Dorsolateral prefrontal cortex (tissue), 120 donors: ENCODE measurements at regions of chr11 and their contacts with region 1.

Region 1: DNA sequence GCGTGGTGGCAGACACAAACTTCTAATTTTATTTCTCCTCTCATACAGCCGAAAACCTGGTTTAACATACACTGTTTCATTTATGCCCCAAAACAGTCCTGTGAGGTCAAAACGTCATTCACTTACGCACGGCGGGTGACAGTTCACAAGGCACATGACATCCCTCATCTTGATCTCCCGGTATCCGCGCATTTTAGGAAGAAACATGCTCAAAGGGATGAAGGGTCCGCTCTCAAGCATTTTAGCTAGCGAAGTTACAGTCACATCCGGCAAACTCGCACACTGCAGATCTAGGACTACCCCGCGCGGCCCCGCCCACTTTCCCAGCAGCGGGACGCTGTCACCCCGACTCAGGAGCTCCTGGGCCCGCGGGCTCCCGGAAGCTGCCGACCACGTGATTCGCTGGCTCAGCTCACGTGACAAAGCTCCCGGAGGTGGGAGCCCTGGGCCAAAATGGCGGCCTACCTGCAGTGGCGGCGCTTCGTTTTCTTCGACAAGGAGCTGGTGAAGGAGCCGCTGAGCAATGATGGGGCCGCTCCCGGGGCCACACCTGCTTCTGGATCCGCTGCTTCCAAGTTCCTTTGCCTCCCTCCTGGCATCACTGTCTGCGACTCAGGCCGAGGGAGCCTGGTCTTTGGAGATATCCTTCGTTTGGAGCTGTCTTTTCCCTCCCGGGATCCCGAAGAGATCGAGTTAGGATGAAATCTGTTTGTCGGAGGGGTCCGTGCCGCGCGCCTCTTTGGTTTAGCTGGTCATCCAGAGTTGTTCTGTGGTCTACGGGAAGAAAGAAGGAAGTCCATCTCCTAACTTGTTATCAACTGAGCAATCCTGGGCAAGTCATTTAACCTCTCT is at the start of gene VPS11:
- DNase-seq: peak; percentile 95 to 99 (median 97)
- H3K4me3 ChIP-seq: peak within 1 kb of the TSS; percentile 68 to 100 (median 87)
- H3K27ac ChIP-seq: peak within 1 kb of the TSS; percentile 51 to 97 (median 90)
- H3K27me3 ChIP-seq: no peaks in the 10 kb centered on the region
- CTCF ChIP-seq: peak in 39 of 56 donors; percentile 3 to 61 (median 33)
- total RNA-seq, gene VPS11: 33.3 to 65.7 (median 50.5) TPM

Region 2: DNA sequence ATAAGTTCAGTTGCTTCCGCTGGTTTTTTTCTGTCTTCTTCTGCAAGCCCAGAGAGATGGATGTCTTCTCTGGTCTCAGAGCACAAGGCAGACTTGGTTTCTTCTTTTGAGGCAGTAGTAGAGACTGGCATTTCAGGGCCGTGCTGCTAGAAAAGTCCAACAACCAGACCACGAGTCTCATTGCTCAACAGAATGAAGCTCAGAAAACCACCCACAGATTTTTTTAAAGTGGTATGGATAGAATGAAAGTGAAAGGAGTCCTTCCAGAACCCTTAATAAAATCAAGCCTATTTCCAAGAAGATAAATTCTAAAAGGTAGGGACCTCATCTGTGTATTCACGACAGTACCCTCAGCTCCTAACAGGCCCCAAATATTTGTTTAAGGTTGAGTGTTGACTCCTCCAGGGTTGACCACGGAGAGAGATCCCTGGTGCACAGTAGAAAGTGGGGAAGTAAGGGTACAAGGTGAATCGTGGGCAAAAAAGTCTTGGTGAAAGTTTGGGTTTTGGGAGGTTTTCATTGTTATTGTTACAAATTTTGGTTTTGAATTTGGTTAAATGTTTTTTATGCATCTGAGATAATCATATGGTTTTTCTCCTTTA is 233.1 kb before region 1 on chr11:
- intact Hi-C with region 1: no loop called
- DNase-seq: no peak
- H3K4me3 ChIP-seq: no peak overlapping the region
- H3K27ac ChIP-seq: no peak overlapping the region
- H3K27me3 ChIP-seq: no peaks in the 10 kb centered on the region
- CTCF ChIP-seq: no peak

Region 3: DNA sequence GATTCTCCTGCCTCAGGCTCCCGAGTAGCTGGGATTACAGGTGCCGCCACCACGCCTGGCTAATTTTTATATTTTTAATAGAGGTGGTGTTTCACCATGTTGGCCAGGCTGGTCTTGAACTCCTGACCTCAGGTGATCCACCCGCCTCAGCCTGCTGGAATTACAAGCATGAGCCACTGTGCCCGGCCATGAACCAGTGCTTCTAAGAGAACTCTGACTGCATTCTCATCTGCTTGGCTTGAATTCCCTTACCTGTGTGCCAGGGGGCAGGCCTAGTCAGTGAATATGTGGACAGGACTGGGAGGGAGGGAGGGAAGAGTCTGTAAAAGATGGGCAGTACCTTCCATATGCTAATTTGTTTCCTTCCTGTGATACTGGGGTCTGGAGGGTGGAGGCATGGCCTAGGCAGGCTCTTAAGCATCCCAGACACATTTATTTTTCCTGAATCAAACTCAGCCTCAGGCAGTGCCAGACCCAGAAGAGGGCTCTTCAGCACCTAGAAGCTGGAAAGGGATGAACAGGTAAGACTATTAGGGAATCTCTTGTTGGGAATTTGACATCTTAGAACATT is 56.0 kb before region 1 on chr11:
- intact Hi-C with region 1: no loop called
- DNase-seq: no peak
- H3K4me3 ChIP-seq: no peak overlapping the region
- H3K27ac ChIP-seq: no peak overlapping the region
- H3K27me3 ChIP-seq: no peaks in the 10 kb centered on the region
- CTCF ChIP-seq: no peak

Region 4: GRCh38 chr11:119030329-119031049 is 37.1 kb before region 1 on chr11 and contains the start of gene SLC37A4:
- intact Hi-C with region 1: loop called in 1 of 2 experiments (anchors 5 kb)
- DNase-seq: peak; percentile 97 to 99 (median 98)
- H3K4me3 ChIP-seq: peak within 1 kb of the TSS; percentile 56 to 98 (median 88)
- H3K27ac ChIP-seq: peak within 1 kb of the TSS; percentile 19 to 95 (median 85)
- H3K27me3 ChIP-seq: no peaks in the 10 kb centered on the region
- CTCF ChIP-seq: peak in 47 of 56 donors; percentile 72 to 97 (median 90)
- total RNA-seq, gene SLC37A4: 6.9 to 20.8 (median 12.6) TPM

Region 5: DNA sequence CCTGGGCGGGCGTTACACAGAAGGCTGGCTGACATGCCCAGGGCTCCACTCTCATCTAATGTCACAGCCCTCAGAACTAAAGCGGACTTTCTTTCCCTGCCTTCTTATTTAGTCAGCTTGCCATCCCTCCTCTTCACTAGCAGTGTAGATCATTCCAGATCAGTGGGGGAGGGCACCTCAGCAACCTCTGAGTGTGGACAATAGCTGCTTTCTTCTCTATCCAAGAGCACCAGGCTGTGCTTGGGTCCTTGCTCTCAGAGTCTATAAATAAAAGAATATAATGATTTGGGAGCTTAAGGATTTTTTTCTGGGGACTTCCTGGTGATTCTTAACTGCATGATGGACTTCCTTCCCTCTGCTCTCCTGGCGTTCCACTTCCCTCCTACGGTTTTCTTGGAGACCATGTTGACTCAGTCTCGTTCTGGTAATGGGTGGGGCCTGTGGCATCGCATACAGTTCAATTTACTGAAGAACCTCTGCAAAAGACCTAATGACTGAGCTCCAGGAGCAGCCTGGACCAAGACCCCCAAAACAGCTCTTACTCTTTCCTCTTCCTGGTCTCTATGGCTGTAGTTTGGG is 14.2 kb after region 1 on chr11:
- intact Hi-C with region 1: no loop called
- DNase-seq: peak in 5 of 10 donors; percentile 61 to 86 (median 67)
- H3K4me3 ChIP-seq: peak overlapping the region in 9 of 59 donors; percentile 1 to 31 (median 22)
- H3K27ac ChIP-seq: peak overlapping the region; percentile 79 to 100 (median 96)
- H3K27me3 ChIP-seq: no peaks in the 10 kb centered on the region
- CTCF ChIP-seq: no peak